Lower leg skin (tissue), 4 donors: ENCODE measurements at regions of chr17 and their contacts with region 1.

Region 1: GRCh38 chr17:40763752-40764151 is 8.2 kb downstream of the KRT26 start:
- DNase-seq: no peak
- H3K4me3 ChIP-seq: no peak overlapping the region
- CTCF ChIP-seq: no peak
- POLR2A ChIP-seq: no peak

Region 2: DNA sequence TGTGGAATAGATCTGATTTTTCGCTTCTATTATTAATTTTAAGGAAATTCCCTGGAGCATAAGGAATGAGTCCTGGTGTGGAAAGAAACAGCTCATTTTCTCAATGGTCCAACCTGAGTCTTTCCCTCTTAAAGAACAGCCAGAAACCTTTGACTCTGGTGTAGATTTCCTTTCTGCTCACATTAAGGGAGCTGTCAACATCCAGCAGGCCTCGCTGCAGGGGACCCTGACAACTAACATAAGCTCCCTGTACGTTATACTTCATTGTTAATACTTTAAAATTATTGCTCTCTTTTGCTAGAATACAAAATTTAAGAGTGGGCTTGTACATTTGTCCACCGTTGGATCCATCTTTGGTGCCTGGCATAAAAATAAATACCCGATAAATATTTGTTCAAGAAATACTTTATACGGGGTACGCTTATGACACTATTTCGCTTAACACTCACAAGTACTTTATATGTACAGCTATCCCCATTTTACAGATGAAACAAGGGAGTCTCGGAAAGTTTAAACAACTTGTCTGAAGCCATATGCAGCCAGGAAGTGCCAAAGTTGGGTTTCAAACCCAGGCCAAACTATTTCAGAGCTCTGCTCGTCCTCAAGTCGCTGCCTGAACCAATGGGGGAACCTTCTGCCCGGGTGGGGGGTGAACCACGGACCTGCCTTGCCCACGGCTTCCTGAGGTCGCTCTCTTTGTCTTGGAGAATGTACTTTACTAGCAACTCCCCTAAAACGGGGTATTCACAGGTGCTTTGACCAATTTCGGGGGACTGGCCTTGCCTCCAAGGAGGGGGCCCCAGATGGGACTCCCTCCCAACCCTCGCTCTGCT is 116.7 kb before region 1 on chr17:
- intact Hi-C with region 1: no loop called
- DNase-seq: no peak
- H3K4me3 ChIP-seq: peak overlapping the region; percentile 86
- CTCF ChIP-seq: no peak
- POLR2A ChIP-seq: no peak

Region 3: DNA sequence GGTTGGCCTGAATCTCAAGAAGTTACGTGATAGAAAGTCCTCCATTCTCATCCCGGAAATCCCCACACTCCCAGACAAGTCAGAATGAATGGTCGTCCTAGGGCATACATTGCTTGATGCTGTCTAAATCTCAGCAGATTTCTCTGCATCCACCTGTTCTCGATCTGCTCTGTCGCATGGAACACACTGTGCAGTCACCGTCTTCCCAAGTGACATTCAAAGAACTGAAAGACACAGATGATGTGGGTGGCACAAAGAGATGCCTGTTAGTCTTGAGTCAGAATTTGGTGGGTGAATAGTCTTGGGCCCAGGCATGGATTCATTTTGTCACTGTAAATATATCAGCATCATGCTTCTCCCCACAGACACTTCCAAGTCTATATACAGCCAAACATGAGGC is 468.0 kb after region 1 on chr17:
- intact Hi-C with region 1: loop called (anchors 10 kb)
- DNase-seq: no peak
- H3K4me3 ChIP-seq: no peak overlapping the region
- CTCF ChIP-seq: no peak
- POLR2A ChIP-seq: no peak